ENCODE measurements at regions of chr4 and their contacts with region 1.

Region 1: DNA sequence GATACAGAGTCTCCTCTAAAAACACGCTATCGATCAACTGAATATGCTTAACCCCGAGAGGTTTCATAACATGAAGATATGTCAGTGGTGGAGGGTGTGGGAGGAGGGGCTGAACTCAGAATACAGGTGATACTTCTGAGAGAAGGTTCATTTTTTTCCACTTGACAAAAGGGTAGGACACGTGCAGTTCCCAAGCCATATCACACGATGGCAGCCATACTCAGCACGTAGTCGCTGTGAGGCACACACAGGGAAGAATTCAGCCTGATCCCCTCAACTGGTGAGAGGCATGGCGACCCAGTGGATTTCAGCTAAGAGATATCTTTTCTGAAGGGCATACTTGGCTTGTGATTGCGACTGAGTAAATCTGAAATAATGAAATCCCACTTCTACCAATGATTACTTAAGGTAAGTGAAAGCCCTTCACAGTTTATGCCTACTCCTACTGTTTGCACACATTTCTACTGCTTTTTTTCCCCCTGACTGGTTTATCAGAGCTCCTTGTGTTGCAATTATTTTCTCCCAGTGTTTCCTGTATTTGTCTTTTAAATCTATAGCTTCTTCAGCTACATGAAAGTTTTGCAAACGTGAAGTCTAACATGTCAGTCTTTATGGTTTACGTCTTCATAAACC is 133.1 kb downstream of the CORIN start:
- DNase-seq: no peak
- H3K4me3 ChIP-seq: no peak overlapping the region
- H3K27ac ChIP-seq: no peak overlapping the region
- H3K4me1 ChIP-seq: no peaks in the 10 kb centered on the region
- H3K27me3 ChIP-seq: no peaks in the 10 kb centered on the region
- CTCF ChIP-seq: peak in 1 of 3 experiments; percentile 36
- EP300 ChIP-seq: no peak
- POLR2A ChIP-seq: no peak

Region 2: GRCh38 chr4:47836641-47837093 is 131.9 kb after region 1 on chr4:
- intact Hi-C with region 1: loop called (anchors 5 kb)
- DNase-seq: peak; percentile 93
- H3K4me3 ChIP-seq: peak overlapping the region; percentile 53 to 64 (median 58)
- H3K27ac ChIP-seq: peak overlapping the region in 1 of 4 donors; percentile 8
- H3K4me1 ChIP-seq: peaks cover 13 to 30% (median 28%) of the 10 kb centered on the region in 4 donors
- H3K27me3 ChIP-seq: no peaks in the 10 kb centered on the region
- CTCF ChIP-seq: peak; percentile 53 to 77 (median 59)
- EP300 ChIP-seq: no peak
- POLR2A ChIP-seq: no peak